ENCODE measurements at regions of chr9 and their contacts with region 1.

Region 1: DNA sequence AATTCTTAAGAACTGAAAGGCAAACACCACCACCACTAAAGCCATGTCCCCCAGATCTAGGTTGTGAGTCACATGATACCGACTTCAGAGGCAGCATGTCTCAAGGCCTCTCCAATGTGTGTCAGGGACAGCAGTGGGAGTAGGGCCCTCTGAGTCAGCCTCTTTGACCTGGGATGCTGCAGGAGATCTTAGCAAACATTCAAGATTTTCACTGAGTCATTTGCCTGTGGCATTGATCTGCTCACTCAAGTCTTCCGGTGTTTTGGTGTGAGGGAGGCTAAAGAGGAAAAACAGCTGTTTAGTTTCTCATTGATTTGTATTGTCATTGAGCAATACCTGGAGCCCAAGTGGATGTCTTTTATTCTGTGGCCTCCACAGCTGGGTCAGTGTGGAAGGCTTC is 36.1 kb downstream of the TMC1 start:
- DNase-seq: peak; percentile 79
- H3K4me3 Mint-ChIP-seq: no peak overlapping the region
- H3K27ac Mint-ChIP-seq: peak overlapping the region; percentile 60
- H3K4me1 Mint-ChIP-seq: peaks cover 16% of the 10 kb centered on the region
- H3K27me3 Mint-ChIP-seq: no peaks in the 10 kb centered on the region

Region 2: DNA sequence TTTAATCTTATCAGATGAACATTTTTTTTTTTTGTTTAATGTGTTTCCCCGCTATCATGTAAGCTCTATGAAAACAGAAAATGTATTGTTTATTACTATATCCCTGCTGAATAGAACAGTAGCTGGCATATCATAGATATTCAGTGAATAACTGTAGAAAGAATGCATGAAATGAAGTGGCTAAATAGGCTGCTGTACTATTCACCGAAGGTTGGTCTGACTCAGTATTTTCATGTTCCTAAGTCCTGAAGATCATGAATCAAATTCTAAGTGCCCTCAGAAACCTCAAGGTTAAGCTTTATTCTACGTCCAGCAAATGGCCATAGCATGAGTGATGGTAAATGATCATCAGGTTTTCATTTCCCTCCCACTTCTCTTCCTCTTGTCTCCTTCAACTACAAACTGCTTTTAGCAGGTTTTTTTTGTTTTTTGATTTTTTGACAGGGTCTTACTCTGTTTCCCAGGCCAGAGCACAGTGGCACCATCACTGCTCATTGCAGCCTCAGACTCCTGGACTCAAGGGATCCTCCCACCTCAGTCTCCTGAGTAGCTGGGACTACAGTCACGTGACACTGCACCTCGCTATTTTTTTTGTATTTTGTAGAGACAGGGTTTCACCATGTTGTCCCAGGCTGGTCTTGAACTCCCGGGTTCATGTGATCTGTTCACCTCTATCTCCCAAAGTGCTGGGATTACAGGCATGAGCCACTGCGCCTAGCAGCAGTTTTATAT is 173.4 kb before region 1 on chr9:
- CTCF ChIA-PET with region 1: no interaction called
- POLR2A ChIA-PET with region 1: no interaction called
- intact Hi-C with region 1: loop called (anchors 1 kb)
- DNase-seq: no peak
- H3K4me3 Mint-ChIP-seq: no peak overlapping the region
- H3K27ac Mint-ChIP-seq: no peak overlapping the region
- H3K4me1 Mint-ChIP-seq: peaks cover 7% of the 10 kb centered on the region
- H3K27me3 Mint-ChIP-seq: no peaks in the 10 kb centered on the region

Region 3: GRCh38 chr9:72443855-72444254 is 113.7 kb before region 1 on chr9:
- CTCF ChIA-PET with region 1: no interaction called
- POLR2A ChIA-PET with region 1: no interaction called
- intact Hi-C with region 1: loop called (anchors 1 kb)
- DNase-seq: peak; percentile 28
- H3K4me3 Mint-ChIP-seq: peak overlapping the region; percentile 25
- H3K27ac Mint-ChIP-seq: peak overlapping the region; percentile 83
- H3K4me1 Mint-ChIP-seq: peaks cover 28% of the 10 kb centered on the region
- H3K27me3 Mint-ChIP-seq: no peaks in the 10 kb centered on the region

Region 4: DNA sequence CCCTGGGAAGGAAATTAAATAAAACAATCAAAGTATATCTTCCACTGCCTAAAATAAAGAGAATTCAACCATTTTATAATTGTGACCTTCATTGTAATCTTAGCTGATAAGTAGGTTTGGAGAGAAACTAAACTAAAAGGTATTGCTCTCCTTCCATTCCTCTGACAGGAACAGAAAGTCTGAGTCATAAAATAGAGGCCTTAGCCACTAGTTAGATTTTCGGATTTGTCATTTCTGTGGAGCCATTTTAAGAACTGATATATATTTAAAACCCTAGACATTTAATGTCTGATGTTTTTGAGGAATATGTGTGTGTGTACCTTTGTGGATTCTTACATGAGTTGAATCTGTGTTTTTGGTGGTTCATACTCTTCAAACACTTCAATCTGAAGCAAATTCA is 47.9 kb before region 1 on chr9:
- CTCF ChIA-PET with region 1: no interaction called
- POLR2A ChIA-PET with region 1: no interaction called
- intact Hi-C with region 1: loop called (anchors 1 kb)
- DNase-seq: no peak
- H3K4me3 Mint-ChIP-seq: no peak overlapping the region
- H3K27ac Mint-ChIP-seq: peak overlapping the region; percentile 86
- H3K4me1 Mint-ChIP-seq: peaks cover 19% of the 10 kb centered on the region
- H3K27me3 Mint-ChIP-seq: no peaks in the 10 kb centered on the region

Region 5: GRCh38 chr9:72540348-72540873 is 17.1 kb before region 1 on chr9:
- CTCF ChIA-PET with region 1: no interaction called
- POLR2A ChIA-PET with region 1: no interaction called
- intact Hi-C with region 1: loop called (anchors 1 kb)
- DNase-seq: no peak
- H3K4me3 Mint-ChIP-seq: no peak overlapping the region
- H3K27ac Mint-ChIP-seq: no peak overlapping the region
- H3K4me1 Mint-ChIP-seq: peaks cover 34% of the 10 kb centered on the region
- H3K27me3 Mint-ChIP-seq: no peaks in the 10 kb centered on the region

Region 6: GRCh38 chr9:72579880-72580570 is 22.5 kb after region 1 on chr9:
- CTCF ChIA-PET with region 1: no interaction called
- POLR2A ChIA-PET with region 1: interaction called, 3 read pairs
- intact Hi-C with region 1: loop called (anchors 1 kb)
- DNase-seq: no peak
- H3K4me3 Mint-ChIP-seq: no peak overlapping the region
- H3K27ac Mint-ChIP-seq: peak overlapping the region; percentile 4
- H3K4me1 Mint-ChIP-seq: peaks cover 42% of the 10 kb centered on the region
- H3K27me3 Mint-ChIP-seq: no peaks in the 10 kb centered on the region

Measured in activated CD4-positive, alpha-beta memory T cell treated with anti-CD3 and anti-CD28 coated beads for 36 hours (primary cell).